Activated CD4-positive, alpha-beta T cell treated with anti-CD3 and anti-CD28 coated beads for 36 hours (primary cell): ENCODE measurements at regions of chr15 and their contacts with region 1.

Region 1: GRCh38 chr15:90598031-90598577 is 68.4 kb downstream of the CRTC3 start:
- DNase-seq: peak; percentile 30
- ATAC-seq: peak; percentile 2
- H3K4me3 Mint-ChIP-seq: peak overlapping the region; percentile 27
- H3K27ac Mint-ChIP-seq: peak overlapping the region; percentile 83
- H3K4me1 Mint-ChIP-seq: peaks cover 70% of the 10 kb centered on the region
- H3K27me3 Mint-ChIP-seq: no peaks in the 10 kb centered on the region

Region 2: DNA sequence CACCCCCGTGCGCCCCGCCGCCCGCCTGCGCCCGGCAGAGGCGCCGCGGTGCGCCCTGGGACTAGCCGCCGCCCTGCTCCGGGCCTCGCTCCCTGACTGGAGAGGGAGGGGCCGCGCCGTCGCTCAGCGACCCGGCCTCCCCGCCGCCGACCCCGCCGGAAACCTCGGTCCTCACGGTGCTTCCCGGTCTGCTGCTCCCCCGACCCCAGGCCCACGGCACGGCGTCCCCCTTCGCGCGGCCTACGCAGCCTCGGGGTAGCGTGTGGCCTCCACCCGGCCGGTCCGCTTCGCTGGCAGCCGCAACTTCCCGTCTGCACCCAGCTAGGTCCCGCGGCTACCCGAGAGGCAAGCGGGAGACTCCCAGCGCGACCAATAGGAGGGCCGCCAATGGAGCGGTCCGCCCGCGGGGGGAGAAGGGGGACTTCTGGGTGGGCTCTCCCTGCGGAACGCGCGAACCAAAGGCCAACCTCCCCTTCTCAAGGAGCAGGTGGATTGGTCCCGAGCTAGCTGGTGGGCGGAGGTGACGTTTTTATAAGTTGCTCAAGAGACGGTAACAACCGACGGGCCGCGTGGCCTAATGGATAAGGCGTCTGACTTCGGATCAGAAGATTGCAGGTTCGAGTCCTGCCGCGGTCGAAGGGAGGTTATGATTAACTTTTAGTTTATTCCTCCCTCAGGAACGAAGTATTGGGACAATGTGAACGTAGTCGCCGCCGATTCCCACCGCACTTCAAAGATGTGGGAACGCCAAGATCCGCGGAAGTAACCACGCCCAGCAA is 1263.4 kb before region 1 on chr15 and contains the start of gene POLG:
- CTCF ChIA-PET with region 1: no interaction called
- POLR2A ChIA-PET with region 1: no interaction called
- intact Hi-C with region 1: loop called in 1 of 2 experiments (anchors 10 kb)
- DNase-seq: peak; percentile 99
- ATAC-seq: peak; percentile 92
- H3K4me3 Mint-ChIP-seq: peak within 1 kb of the TSS; percentile 80
- H3K27ac Mint-ChIP-seq: peak within 1 kb of the TSS; percentile 87
- H3K4me1 Mint-ChIP-seq: peaks cover 56% of the 10 kb centered on the region
- H3K27me3 Mint-ChIP-seq: peaks cover 2% of the 10 kb centered on the region
- total RNA-seq, gene POLG: 63.2 to 80.4 TPM

Region 3: DNA sequence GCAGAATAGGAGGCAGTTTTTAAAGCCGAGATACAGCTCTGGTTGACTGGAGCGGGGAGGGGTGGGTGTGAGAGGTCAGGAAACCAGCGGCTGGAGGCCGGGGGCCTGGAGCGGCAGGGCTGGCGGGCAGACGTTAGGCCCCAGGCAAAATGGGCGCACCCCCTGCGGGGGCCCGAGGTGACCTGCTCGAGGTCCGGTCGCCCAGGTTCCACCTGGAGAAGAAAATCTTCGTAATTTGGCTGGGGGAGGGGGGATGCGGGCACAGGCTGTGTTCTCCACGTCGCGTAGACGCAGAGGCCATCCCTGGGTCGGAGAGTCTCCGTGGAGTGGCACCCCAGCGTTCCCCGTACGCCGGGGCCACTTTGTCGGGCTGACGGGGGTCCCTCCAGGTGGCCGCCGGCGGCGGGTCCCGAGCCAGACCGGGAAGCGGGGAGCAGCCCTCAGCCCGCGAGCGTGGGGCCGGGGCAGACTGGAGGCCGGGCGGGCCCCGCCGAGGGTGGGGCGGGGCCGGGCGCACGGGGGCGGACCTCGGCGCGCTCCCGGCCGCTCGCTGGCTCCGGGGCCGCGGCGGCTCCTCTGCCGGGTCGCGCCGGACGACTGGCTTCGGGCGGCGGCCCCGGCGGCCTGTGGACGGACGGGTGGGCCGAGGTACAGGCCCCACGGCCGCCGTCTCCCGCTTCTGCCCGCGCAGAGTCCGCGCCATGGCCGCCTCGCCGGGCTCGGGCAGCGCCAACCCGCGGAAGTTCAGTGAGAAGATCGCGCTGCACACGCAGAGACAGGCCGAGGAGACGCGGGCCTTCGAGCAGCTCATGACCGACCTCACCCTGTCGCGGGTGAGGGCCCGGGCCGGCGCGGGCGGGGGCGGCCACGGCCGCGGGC is 68.5 kb before region 1 on chr15 and contains the start of gene CRTC3:
- CTCF ChIA-PET with region 1: interaction called, 3 read pairs
- POLR2A ChIA-PET with region 1: no interaction called
- intact Hi-C with region 1: loop called in 1 of 2 experiments (anchors 1 kb)
- DNase-seq: peak; percentile 72
- ATAC-seq: peak; percentile 88
- H3K4me3 Mint-ChIP-seq: peak within 1 kb of the TSS; percentile 93
- H3K27ac Mint-ChIP-seq: peak within 1 kb of the TSS; percentile 92
- H3K4me1 Mint-ChIP-seq: peaks cover 42% of the 10 kb centered on the region
- H3K27me3 Mint-ChIP-seq: no peaks in the 10 kb centered on the region
- total RNA-seq, gene CRTC3: 32.4 to 36.2 TPM

Region 4: GRCh38 chr15:90539789-90540188 is 58.3 kb before region 1 on chr15:
- CTCF ChIA-PET with region 1: no interaction called
- POLR2A ChIA-PET with region 1: no interaction called
- intact Hi-C with region 1: loop called in 1 of 2 experiments (anchors 5 kb)
- DNase-seq: peak; percentile 66
- ATAC-seq: peak; percentile 92
- H3K4me3 Mint-ChIP-seq: peak overlapping the region; percentile 78
- H3K27ac Mint-ChIP-seq: peak overlapping the region; percentile 99
- H3K4me1 Mint-ChIP-seq: peaks cover 76% of the 10 kb centered on the region
- H3K27me3 Mint-ChIP-seq: no peaks in the 10 kb centered on the region

Region 5: DNA sequence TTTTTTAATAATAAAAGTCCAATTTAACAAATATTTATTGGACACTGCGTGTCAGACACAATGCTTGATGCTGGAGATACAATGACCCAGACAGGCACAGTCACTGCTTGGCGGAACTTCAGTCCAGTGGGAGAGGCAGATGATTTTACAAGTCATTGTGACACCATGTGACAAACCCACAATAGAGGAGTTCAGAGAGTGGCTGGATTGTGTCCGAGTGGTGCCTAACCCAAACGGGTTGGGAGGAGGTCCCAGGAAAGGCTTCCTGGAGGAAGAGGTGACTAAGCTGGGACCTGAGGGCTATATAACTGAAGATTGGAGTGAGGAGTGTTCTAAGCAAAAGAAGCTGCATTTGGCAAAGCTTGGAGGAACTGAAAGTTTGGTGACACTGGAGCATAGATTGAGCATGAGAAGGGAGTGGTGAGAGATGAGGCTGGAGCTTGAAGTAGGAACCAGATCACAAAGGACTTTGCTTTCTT is 27.0 kb before region 1 on chr15:
- CTCF ChIA-PET with region 1: no interaction called
- POLR2A ChIA-PET with region 1: no interaction called
- intact Hi-C with region 1: loop called (anchors 1 kb)
- DNase-seq: no peak
- ATAC-seq: no peak
- H3K4me3 Mint-ChIP-seq: no peak overlapping the region
- H3K27ac Mint-ChIP-seq: peak overlapping the region; percentile 28
- H3K4me1 Mint-ChIP-seq: peaks cover 86% of the 10 kb centered on the region
- H3K27me3 Mint-ChIP-seq: no peaks in the 10 kb centered on the region

Region 6: GRCh38 chr15:90585863-90586262 is 12.2 kb before region 1 on chr15:
- CTCF ChIA-PET with region 1: interaction called, 4 read pairs
- POLR2A ChIA-PET with region 1: no interaction called
- intact Hi-C with region 1: loop called in 1 of 2 experiments (anchors 1 kb)
- DNase-seq: no peak
- ATAC-seq: no peak
- H3K4me3 Mint-ChIP-seq: no peak overlapping the region
- H3K27ac Mint-ChIP-seq: no peak overlapping the region
- H3K4me1 Mint-ChIP-seq: peaks cover 53% of the 10 kb centered on the region
- H3K27me3 Mint-ChIP-seq: no peaks in the 10 kb centered on the region